ENCODE measurements at regions of chr9 and their contacts with region 1.

Region 1: DNA sequence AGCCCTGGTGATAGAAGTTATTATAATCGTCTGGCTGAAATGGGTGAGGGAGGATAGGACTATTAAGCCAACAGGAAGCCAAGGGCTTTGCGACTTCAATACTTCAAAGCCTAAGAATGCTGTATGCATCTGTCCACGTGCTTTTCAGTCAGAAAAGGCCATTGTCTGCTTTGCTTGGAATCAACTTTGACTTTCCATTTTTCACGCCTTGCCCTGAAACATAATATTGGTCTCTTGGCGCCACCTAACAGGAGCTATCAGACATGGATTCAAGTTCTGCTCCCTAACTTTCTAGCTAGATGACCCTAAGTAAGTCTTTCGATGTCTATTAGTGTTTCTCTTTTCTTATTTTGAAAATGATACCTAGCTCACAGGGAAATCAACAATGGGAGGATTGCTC is 572.6 kb downstream of the TLR4 start:
- DNase-seq: no peak
- ATAC-seq: no peak
- H3K4me3 Mint-ChIP-seq: no peak overlapping the region
- H3K27ac Mint-ChIP-seq: no peak overlapping the region
- H3K4me1 Mint-ChIP-seq: peaks cover 10% of the 10 kb centered on the region
- H3K27me3 Mint-ChIP-seq: no peaks in the 10 kb centered on the region; the same call in 1 of the 2 replicates
- CTCF ChIP-seq: no peak

Region 2: GRCh38 chr9:118170032-118170955 is 106.5 kb before region 1 on chr9:
- CTCF ChIA-PET with region 1: interaction called, 10 read pairs
- POLR2A ChIA-PET with region 1: no interaction called
- DNase-seq: peak; percentile 66
- ATAC-seq: peak; percentile 99
- H3K4me3 Mint-ChIP-seq: no peak overlapping the region
- H3K27ac Mint-ChIP-seq: no peak overlapping the region
- H3K4me1 Mint-ChIP-seq: peaks cover 7% of the 10 kb centered on the region
- H3K27me3 Mint-ChIP-seq: no peaks in the 10 kb centered on the region; the same call in 1 of the 2 replicates
- CTCF ChIP-seq: peak; percentile 70

Region 3: GRCh38 chr9:118230319-118230718 is 46.5 kb before region 1 on chr9:
- CTCF ChIA-PET with region 1: no interaction called
- POLR2A ChIA-PET with region 1: no interaction called
- DNase-seq: no peak
- ATAC-seq: no peak
- H3K4me3 Mint-ChIP-seq: no peak overlapping the region
- H3K27ac Mint-ChIP-seq: no peak overlapping the region
- H3K4me1 Mint-ChIP-seq: peaks cover 3% of the 10 kb centered on the region; the same call in 1 of the 2 replicates
- H3K27me3 Mint-ChIP-seq: no peaks in the 10 kb centered on the region
- CTCF ChIP-seq: no peak

Region 4: DNA sequence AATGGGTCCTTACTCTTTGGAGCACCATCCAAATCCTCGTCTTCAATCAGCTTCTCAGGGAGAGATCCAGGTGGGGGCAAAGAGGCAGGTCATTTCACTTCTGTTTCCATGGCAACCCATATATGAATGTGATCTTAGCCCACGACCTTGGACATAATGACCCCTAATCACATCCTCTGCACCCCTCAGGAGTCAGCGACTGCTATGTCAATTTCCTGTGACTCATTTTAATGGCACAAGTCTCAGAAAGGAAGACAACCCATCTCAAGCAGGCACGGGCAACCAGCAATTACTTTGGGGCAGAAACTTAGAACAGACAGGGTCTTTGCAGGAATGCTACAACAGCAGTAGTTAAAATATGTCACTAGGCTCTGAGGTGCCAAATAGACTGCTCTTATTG is 18.6 kb after region 1 on chr9:
- CTCF ChIA-PET with region 1: no interaction called
- POLR2A ChIA-PET with region 1: no interaction called
- DNase-seq: no peak
- ATAC-seq: no peak
- H3K4me3 Mint-ChIP-seq: no peak overlapping the region
- H3K27ac Mint-ChIP-seq: no peak overlapping the region
- H3K4me1 Mint-ChIP-seq: peaks cover 4% of the 10 kb centered on the region; the same call in 1 of the 2 replicates
- H3K27me3 Mint-ChIP-seq: no peaks in the 10 kb centered on the region
- CTCF ChIP-seq: no peak